ENCODE measurements at regions of chr13 and their contacts with region 1.

Region 1: DNA sequence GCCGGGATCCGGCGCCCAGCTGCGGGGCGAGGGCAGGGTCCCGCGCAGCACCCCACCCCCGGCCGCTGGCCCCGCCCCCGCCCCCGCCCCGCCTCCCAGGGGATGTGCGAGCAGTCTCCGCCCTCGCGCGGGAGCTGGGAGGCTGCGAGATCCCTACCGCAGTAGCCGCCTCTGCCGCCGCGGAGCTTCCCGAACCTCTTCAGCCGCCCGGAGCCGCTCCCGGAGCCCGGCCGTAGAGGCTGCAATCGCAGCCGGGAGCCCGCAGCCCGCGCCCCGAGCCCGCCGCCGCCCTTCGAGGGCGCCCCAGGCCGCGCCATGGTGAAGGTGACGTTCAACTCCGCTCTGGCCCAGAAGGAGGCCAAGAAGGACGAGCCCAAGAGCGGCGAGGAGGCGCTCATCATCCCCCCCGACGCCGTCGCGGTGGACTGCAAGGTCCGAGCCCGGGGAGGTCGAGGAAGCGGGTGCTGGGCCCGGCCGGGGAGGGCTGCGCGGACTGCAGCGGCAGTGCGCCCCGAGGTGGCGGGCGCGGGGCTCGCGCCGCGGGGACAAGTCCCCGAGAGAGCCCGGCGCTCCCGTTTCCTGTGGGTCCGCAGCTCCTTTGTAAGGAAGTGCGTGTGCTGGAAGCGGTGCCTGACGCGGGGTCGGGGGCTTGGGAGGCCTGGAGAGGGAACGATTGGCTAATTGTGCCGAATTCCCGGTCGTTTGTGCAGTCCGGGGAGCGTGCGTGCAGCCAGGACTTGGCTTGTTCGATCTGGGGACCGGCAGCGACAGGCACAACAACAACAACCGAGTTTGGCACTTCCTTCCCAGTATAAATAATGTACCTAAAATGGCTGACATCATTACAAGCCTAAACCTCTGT is at the start of gene ITM2B:
- DNase-seq: peak; percentile 70
- H3K4me3 Mint-ChIP-seq: peak within 1 kb of the TSS; percentile 87
- H3K27ac Mint-ChIP-seq: peak within 1 kb of the TSS; percentile 94
- H3K4me1 Mint-ChIP-seq: peaks cover 60% of the 10 kb centered on the region
- H3K27me3 Mint-ChIP-seq: no peaks in the 10 kb centered on the region
- total RNA-seq, gene ITM2B: 110 to 112 TPM

Region 2: DNA sequence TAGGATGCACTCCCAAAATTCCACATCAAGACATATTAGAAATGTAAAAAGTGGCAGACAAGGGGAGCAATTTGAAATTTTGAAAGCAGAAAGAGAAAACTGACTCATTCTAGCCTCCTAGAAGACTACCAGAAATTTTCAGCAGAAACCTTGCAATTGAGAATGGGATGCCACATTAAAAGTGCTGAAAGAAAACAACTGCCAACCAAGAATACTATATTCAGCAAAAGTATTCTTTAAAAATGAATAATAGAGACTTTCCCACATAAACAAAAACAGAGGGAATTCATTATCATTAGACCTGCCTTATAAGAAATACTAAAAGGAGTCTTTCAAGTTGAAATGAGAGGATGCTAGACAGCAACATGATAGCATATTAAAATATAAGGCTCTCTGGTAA is 1258.1 kb before region 1 on chr13:
- CTCF ChIA-PET with region 1: no interaction called
- intact Hi-C with region 1: no loop called
- DNase-seq: no peak
- H3K4me3 Mint-ChIP-seq: no peak overlapping the region
- H3K27ac Mint-ChIP-seq: no peak overlapping the region
- H3K4me1 Mint-ChIP-seq: no peaks in the 10 kb centered on the region
- H3K27me3 Mint-ChIP-seq: no peaks in the 10 kb centered on the region

Region 3: GRCh38 chr13:48126944-48127830 is 106.1 kb before region 1 on chr13:
- CTCF ChIA-PET with region 1: interaction called, 22 read pairs
- intact Hi-C with region 1: loop called (anchors 1 kb)
- DNase-seq: peak; percentile 46
- H3K4me3 Mint-ChIP-seq: peak overlapping the region; percentile 0
- H3K27ac Mint-ChIP-seq: peak overlapping the region; percentile 44
- H3K4me1 Mint-ChIP-seq: peaks cover 29% of the 10 kb centered on the region
- H3K27me3 Mint-ChIP-seq: no peaks in the 10 kb centered on the region

Region 4: DNA sequence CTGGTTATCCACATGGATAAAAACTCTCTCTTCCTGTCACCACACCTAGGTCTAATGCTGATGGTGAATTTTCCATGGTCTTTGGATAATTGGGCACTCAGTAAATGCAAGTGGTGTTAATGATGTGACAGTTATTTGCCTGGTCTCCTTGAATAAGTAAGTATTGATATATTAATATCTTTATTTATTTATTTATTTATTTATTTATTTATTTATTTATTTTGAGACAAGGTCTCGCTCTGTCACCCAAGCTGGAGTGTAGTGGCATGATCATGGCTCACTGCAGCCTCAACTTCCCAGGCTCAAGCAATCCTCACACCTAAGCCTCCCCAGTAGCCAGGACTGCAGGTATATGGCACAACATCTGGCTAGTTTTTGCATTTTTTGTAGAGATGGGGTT is 46.6 kb before region 1 on chr13:
- CTCF ChIA-PET with region 1: interaction called, 5 read pairs
- intact Hi-C with region 1: loop called (anchors 1 kb)
- DNase-seq: no peak
- H3K4me3 Mint-ChIP-seq: no peak overlapping the region
- H3K27ac Mint-ChIP-seq: no peak overlapping the region
- H3K4me1 Mint-ChIP-seq: peaks cover 58% of the 10 kb centered on the region
- H3K27me3 Mint-ChIP-seq: no peaks in the 10 kb centered on the region

Region 5: DNA sequence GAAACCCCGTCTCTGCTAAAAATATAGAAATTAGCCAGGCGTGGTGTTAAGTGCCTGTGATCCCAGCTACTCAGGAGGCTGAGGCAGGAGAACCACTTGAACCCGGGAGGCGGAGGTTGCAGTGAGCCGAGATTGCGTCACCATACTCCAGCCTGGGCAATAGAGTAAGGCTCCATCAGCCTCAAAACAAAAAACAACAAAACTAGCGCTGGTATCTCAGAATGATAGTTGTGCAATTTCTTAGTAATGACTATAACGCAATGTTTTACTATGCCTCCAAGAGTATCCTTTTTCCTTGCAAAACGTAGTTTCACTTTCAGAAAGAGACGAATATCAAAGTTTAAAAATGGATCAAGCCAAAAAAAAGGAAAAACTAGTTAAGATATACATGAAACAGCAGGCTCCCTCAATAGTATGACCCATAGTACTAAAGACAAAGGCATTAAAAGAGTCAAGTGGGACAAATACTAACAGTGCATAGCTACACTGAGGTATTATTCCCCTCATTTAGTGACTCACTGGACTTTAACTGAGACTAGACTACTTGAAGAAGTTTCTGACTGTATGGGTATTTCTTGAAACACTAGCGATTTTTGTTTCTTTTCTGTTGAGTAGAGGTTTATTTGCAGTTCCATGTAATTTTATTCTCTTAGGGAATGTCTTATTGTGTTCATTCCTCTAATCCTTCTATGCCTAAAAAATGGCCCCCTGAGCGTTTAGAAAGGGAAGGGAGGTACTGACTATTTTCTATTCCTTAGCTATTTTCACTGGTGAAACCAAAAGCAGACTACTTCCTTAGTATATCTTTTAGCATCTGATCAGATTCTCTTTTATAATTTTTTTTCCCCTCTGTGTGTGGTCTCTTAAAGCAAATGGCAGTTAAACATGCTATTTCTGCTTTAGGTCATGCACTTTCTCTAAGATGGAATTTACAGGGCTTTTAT is 10.6 kb before region 1 on chr13:
- CTCF ChIA-PET with region 1: interaction called, 6 read pairs
- intact Hi-C with region 1: loop called (anchors 2 kb)
- DNase-seq: no peak
- H3K4me3 Mint-ChIP-seq: no peak overlapping the region
- H3K27ac Mint-ChIP-seq: peak overlapping the region; percentile 5
- H3K4me1 Mint-ChIP-seq: peaks cover 55% of the 10 kb centered on the region
- H3K27me3 Mint-ChIP-seq: no peaks in the 10 kb centered on the region

Region 6: GRCh38 chr13:48303359-48304142 is 70.3 kb after region 1 on chr13 and contains the start of gene RB1:
- CTCF ChIA-PET with region 1: no interaction called
- intact Hi-C with region 1: loop called (anchors 1 kb)
- DNase-seq: peak; percentile 92
- H3K4me3 Mint-ChIP-seq: peak within 1 kb of the TSS; percentile 87
- H3K27ac Mint-ChIP-seq: peak within 1 kb of the TSS; percentile 97
- H3K4me1 Mint-ChIP-seq: peaks cover 23% of the 10 kb centered on the region
- H3K27me3 Mint-ChIP-seq: no peaks in the 10 kb centered on the region
- total RNA-seq, gene RB1: 25.1 to 25.6 TPM

Region 7: DNA sequence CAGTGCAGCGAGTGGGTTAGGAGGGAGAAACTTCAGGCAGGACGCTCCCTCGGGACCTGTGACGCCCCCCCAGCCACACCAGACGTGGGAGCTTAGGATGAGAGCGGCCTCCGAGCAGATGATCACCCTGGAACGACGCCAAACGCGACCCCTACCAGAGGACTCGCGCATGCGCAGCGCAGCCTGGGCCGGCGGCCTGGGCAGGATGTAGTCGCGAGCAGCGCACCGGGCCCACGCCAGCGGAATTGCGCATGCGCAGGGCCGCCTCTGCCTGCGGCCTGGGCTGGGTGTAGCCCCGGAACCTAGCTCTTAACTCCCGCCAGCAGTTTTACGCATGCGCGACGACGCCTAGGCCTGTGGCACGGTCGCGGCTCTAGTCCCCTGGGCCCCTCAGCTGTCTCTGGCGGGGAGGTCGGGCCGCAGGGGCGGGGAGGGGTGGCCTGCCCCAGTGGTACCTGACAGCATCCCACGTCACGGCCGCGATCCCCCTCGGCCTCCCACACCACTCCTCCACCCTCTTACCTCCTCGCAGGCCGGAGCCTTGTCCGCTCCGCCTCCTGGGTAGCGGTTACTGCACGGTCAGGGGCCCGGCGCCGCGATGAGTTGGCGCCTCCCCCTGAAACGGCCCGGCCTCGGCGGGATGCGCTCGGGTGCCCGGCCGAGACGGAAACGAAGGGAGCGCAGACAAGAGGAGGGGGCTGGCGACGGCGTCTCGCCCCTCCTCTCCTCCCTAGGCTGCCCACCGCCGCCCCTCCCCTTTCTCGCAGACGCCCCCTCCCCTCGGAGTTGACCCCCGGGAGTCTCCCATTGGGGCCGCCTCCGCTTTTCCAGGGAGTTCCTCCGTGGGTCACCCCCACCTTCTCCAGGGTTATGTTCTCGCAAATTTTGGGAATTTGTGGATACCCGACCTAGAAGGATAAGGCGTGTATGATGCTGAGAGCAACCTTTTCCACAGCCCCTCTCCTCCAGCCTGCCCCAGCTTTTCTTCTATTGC is 299.5 kb after region 1 on chr13 and contains the start of gene RCBTB2:
- CTCF ChIA-PET with region 1: no interaction called
- intact Hi-C with region 1: loop called (anchors 2 kb)
- DNase-seq: peak; percentile 98
- H3K4me3 Mint-ChIP-seq: peak within 1 kb of the TSS; percentile 93
- H3K27ac Mint-ChIP-seq: peak within 1 kb of the TSS; percentile 97
- H3K4me1 Mint-ChIP-seq: peaks cover 17% of the 10 kb centered on the region
- H3K27me3 Mint-ChIP-seq: no peaks in the 10 kb centered on the region
- total RNA-seq, gene RCBTB2: 1.2 to 1.4 TPM

Region 8: GRCh38 chr13:48580185-48580803 is 347.0 kb after region 1 on chr13:
- CTCF ChIA-PET with region 1: interaction called, 4 read pairs
- intact Hi-C with region 1: loop called (anchors 2 kb)
- DNase-seq: peak; percentile 88
- H3K4me3 Mint-ChIP-seq: no peak overlapping the region
- H3K27ac Mint-ChIP-seq: no peak overlapping the region
- H3K4me1 Mint-ChIP-seq: peaks cover 2% of the 10 kb centered on the region
- H3K27me3 Mint-ChIP-seq: peaks cover 6% of the 10 kb centered on the region